Activated naive CD4-positive, alpha-beta T cell treated with anti-CD3 and anti-CD28 coated beads for 36 hours (primary cell): ENCODE measurements at regions of chr11 and their contacts with region 1.

Region 1: GRCh38 chr11:117107701-117108590 is 9.7 kb upstream of the SIK3 start:
- DNase-seq: no peak
- H3K4me3 Mint-ChIP-seq: no peak overlapping the region
- H3K27ac Mint-ChIP-seq: no peak overlapping the region
- H3K4me1 Mint-ChIP-seq: peaks cover 2% of the 10 kb centered on the region
- H3K27me3 Mint-ChIP-seq: no peaks in the 10 kb centered on the region

Region 2: DNA sequence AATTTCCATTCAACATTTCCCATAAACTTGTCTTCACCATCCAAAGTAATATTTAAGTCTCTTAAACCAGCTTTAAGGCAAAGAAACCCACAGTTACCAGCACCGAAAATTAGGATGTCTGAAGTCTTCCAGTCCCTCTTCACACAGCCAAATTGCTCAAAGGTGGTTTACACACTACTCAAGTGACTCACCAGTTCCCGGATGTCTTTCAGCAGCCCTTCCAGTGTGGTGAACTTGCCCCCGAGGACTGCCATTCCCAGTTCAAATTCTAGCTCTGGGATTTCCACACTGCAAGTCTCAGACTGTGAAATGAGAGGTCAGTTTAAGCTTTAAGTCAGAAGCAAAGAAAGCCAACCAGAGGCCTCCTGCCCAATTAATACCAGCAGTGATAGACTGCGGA is 325.2 kb before region 1 on chr11:
- CTCF ChIA-PET with region 1: interaction called, 14 read pairs
- intact Hi-C with region 1: no loop called
- DNase-seq: no peak
- H3K4me3 Mint-ChIP-seq: no peak overlapping the region
- H3K27ac Mint-ChIP-seq: peak overlapping the region; percentile 71
- H3K4me1 Mint-ChIP-seq: peaks cover 84% of the 10 kb centered on the region
- H3K27me3 Mint-ChIP-seq: no peaks in the 10 kb centered on the region

Region 3: DNA sequence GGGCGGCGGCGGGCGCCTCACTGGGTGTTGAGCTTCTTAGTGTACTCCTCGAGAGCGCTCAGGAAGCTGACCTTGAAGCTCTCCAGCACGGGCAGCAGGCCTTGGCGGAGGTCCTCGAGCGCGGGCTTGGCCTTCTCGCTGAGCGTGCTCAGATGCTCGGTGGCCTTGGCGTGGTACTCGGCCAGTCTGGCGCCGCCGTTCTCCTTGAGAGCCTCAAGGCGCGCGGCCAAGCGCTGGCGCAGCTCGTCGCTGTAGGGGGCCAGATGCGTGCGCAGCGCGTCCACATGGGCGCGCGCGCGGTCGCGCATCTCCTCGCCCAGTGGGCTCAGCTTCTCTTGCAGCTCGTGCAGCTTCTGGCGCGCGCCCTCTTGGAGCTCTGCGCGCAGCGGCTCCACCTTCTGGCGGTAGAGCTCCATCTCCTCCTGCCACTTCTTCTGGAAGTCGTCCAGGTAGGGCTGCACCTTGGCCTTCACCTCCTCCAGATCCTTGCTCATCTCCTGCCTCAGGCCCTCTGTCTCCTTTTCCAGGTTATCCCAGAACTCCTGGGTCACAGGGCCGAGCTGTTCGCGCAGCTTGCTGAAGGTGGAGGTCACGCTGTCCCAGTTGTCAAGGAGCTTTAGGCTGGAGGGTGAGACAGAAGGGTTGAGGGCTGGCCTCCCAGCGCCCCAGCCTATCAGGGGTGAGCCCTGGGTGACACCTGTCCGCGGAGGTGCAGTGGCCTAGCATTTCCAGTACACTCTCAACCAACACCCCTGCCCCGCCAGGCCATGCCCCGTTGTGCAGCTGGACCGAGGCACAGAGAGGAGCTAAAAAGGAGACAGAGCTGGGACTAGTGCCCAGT is 271.9 kb before region 1 on chr11:
- CTCF ChIA-PET with region 1: interaction called, 18 read pairs
- intact Hi-C with region 1: loop called (anchors 1 kb)
- DNase-seq: peak; percentile 86
- H3K4me3 Mint-ChIP-seq: peak overlapping the region; percentile 69
- H3K27ac Mint-ChIP-seq: no peak overlapping the region
- H3K4me1 Mint-ChIP-seq: peaks cover 8% of the 10 kb centered on the region
- H3K27me3 Mint-ChIP-seq: peaks cover 4% of the 10 kb centered on the region

Region 4: GRCh38 chr11:116890193-116890592 is 217.8 kb before region 1 on chr11:
- CTCF ChIA-PET with region 1: interaction called, 10 read pairs
- intact Hi-C with region 1: loop called (anchors 1 kb)
- DNase-seq: peak; percentile 57
- H3K4me3 Mint-ChIP-seq: no peak overlapping the region
- H3K27ac Mint-ChIP-seq: peak overlapping the region; percentile 9
- H3K4me1 Mint-ChIP-seq: peaks cover 12% of the 10 kb centered on the region
- H3K27me3 Mint-ChIP-seq: no peaks in the 10 kb centered on the region

Region 5: DNA sequence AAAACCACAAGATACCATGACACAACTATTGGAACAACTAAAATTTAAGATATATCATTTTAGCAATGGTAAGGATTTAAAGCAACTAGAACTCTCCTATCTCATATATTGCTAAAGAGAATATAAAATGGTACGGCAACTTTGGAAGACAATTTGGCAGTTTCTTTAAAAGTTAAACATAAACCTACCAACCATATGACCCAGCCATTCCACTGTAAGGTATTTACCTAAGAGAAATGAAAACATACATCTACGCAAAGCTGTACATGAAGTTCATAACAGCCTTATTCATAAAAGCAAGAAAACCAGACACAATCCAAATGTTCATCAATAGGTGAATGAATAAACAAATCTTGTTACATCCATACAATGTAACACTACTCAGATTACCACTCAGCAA is 41.0 kb before region 1 on chr11:
- CTCF ChIA-PET with region 1: no interaction called
- intact Hi-C with region 1: no loop called
- DNase-seq: no peak
- H3K4me3 Mint-ChIP-seq: no peak overlapping the region
- H3K27ac Mint-ChIP-seq: no peak overlapping the region
- H3K4me1 Mint-ChIP-seq: peaks cover 70% of the 10 kb centered on the region
- H3K27me3 Mint-ChIP-seq: no peaks in the 10 kb centered on the region